ENCODE measurements at regions of chr2 and their contacts with region 1.

Region 1: GRCh38 chr2:6917071-6917760 is at the start of gene RNF144A:
- DNase-seq: peak in 1 of 2 donors; percentile 73
- H3K4me3 ChIP-seq: peak within 1 kb of the TSS; percentile 83 to 98
- H3K27ac ChIP-seq: no peak within 1 kb of the TSS
- H3K4me1 ChIP-seq: peaks cover 3 to 6% of the 10 kb centered on the region in 2 donors
- H3K27me3 ChIP-seq: no peaks in the 10 kb centered on the region
- CTCF ChIP-seq: peak; percentile 27 to 48 (median 36)
- total RNA-seq, gene RNF144A: 1.8 TPM

Region 2: DNA sequence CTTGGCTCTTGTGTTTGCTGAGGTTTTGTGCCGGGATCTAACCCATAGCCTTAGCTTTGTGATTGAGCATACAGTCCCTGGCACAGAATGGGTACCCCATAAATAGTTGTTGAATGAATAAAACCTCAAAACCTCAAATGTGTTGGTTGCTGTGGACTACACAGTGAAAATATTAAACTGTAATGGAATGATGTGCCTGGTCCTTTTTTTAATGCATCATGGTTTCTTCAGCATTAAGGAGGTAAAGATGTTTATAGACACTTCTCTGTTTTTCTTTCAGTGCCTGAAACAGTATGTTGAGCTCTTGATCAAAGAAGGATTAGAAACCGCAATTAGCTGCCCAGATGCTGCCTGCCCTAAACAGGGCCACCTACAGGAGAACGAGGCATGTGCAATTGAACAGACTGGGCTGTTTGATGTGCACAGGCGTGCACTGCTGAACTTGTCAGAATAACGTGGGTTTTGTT is 97.0 kb after region 1 on chr2:
- intact Hi-C with region 1: loop called (anchors 5 kb)
- DNase-seq: no peak
- H3K4me3 ChIP-seq: no peak overlapping the region
- H3K27ac ChIP-seq: no peak overlapping the region
- H3K4me1 ChIP-seq: peaks cover 0 to 3% of the 10 kb centered on the region in 2 donors
- H3K27me3 ChIP-seq: no peaks in the 10 kb centered on the region
- CTCF ChIP-seq: peak in 2 of 3 experiments; percentile 17 to 21

Region 3: DNA sequence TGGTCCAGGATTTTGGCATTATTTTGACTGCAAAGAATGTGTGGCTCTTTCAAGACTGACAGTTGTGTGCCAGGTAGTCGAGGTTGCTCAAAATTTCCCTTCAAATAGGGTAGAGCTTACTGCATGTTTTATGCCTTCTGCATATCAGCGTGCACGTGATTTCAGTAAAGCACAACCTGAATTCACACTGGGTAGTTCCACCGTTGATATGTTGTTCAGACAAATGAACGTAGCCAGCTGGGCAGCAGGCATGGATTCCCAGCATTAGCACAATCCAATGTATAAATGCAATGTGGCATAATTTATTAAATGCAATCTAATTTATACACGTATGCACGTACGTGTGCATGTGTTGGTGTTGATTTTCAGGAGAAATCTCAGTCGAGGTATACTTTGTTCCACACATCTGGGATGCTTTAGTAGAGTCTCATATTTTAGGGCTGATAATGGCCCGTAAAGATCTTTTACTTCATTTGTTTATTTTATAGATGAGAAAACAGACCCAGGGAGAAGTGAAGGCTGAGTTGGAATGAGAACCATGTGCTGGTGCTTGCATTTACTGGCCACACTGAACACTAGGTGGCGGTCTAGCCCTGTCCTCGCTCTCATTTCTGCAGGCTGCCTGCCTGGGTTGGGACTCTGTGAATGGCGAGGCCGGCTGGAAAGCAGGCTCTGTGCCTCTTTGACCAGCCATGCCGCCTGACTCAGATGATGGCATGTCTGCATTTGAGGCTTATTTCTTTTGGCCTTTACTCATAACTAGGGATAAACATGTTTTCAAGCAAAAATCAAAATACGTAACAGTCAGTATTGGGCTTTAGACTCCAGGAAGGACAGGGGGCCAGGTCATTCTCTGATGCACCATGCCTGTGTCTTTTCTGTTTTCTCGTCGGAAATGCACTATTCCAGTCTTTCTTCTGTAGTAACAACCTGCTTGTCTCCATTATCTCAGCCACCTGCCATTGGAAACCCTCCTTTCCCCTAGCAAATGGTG is 120.4 kb after region 1 on chr2:
- intact Hi-C with region 1: loop called (anchors 2 kb)
- DNase-seq: peak; percentile 43 to 89
- H3K4me3 ChIP-seq: no peak overlapping the region
- H3K27ac ChIP-seq: peak overlapping the region in 1 of 2 donors; percentile 11
- H3K4me1 ChIP-seq: peaks cover 0 to 7% of the 10 kb centered on the region in 2 donors
- H3K27me3 ChIP-seq: no peaks in the 10 kb centered on the region
- CTCF ChIP-seq: peak; percentile 57 to 86 (median 69)

Region 4: DNA sequence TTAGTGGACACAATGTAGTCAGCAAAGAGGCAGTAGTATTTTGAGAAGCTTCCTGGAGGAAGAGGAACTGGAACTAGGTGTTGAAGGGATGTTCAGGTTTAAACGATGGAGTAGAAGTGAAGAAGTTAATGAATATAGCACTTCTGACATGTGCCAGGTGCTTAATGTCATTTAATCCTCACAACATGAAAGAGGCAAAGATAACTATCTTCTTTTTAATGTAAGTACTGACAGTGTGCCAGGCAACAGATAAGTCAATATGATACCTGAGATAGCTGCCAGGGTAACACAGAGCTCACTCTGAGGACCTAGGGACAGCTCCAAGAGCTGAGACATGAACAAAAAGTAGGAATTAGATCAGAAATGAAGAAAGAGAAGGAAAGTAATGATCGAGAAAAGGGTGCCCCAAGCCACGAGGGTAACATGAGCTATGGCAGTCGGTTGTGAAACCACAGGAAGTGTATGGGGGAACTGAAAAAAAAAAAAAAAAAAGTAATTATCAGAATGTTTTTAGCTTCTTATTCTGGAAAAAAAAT is 140.7 kb after region 1 on chr2:
- intact Hi-C with region 1: no loop called
- DNase-seq: no peak
- H3K4me3 ChIP-seq: no peak overlapping the region
- H3K27ac ChIP-seq: no peak overlapping the region
- H3K4me1 ChIP-seq: peaks cover 3 to 19% of the 10 kb centered on the region in 2 donors
- H3K27me3 ChIP-seq: no peaks in the 10 kb centered on the region
- CTCF ChIP-seq: no peak